ENCODE measurements at regions of chrX and their contacts with region 1.

Region 1: GRCh38 chrX:69538321-69538876 is 34.3 kb downstream of the NALF2 start:
- DNase-seq: peak; percentile 27 to 85
- H3K4me3 ChIP-seq: peak overlapping the region; percentile 20 to 64 (median 41); a peak in 7 of 8 replicates
- H3K27ac ChIP-seq: no peak overlapping the region
- H3K4me1 ChIP-seq: peaks cover 0 to 2% (median 0%) of the 10 kb centered on the region in 4 experiments; a peak in 2 of 7 replicates
- H3K27me3 ChIP-seq: no peaks in the 10 kb centered on the region; a peak in 1 of 7 replicates
- CTCF ChIP-seq: peak; percentile 66 to 88 (median 79)
- EP300 ChIP-seq: no peak
- POLR2A ChIP-seq: no peak
- RAD21 ChIP-seq: peak; percentile 91 to 95

Region 2: GRCh38 chrX:69523314-69523713 is 15.1 kb before region 1 on chrX:
- CTCF ChIA-PET with region 1: interaction called, 26 read pairs
- POLR2A ChIA-PET with region 1: no interaction called
- DNase-seq: no peak
- H3K4me3 ChIP-seq: no peak overlapping the region
- H3K27ac ChIP-seq: no peak overlapping the region
- H3K4me1 ChIP-seq: peaks cover 0 to 9% (median 0%) of the 10 kb centered on the region in 4 experiments; a peak in 1 of 7 replicates
- H3K27me3 ChIP-seq: no peaks in the 10 kb centered on the region
- CTCF ChIP-seq: no peak
- EP300 ChIP-seq: no peak
- POLR2A ChIP-seq: no peak
- RAD21 ChIP-seq: no peak

Region 3: DNA sequence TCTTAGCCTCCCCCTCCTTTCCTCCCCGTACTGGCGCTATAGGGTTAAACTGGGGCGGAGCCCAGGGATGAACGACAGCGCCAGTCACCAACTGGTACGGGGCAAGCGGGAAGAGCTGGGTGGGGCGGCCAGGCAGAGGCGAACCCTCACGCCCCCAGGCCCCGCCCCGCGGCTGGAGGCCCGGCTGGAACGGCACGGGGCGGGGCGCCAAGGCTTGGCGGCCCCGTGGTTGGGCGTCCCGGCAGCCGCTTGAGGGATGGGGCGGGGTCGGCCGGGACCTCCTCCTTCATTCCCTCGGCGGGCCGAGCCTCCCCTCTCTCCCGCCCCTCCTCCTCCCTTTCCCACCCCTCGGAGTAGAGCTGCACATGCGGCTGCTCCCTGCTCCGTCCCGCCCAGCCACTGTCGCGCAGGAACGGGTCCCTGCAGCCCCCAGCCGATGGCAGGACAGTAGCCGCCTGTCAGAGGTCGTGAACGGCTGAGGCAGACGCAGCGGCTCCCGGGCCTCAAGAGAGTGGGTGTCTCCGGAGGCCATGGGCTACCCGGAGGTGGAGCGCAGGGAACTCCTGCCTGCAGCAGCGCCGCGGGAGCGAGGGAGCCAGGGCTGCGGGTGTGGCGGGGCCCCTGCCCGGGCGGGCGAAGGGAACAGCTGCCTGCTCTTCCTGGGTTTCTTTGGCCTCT is 77.5 kb after region 1 on chrX and contains the start of gene EDA:
- CTCF ChIA-PET with region 1: interaction called, 28 read pairs
- POLR2A ChIA-PET with region 1: interaction called, 3 read pairs
- DNase-seq: peak; percentile 57 to 85
- H3K4me3 ChIP-seq: peak within 1 kb of the TSS; percentile 53 to 75 (median 63)
- H3K27ac ChIP-seq: no peak within 1 kb of the TSS
- H3K4me1 ChIP-seq: peaks cover 0 to 4% (median 0%) of the 10 kb centered on the region in 4 experiments; a peak in 1 of 7 replicates
- H3K27me3 ChIP-seq: peaks cover 0 to 4% (median 2%) of the 10 kb centered on the region in 4 experiments; a peak in 3 of 7 replicates
- CTCF ChIP-seq: no peak
- EP300 ChIP-seq: no peak
- POLR2A ChIP-seq: no peak
- RAD21 ChIP-seq: no peak
- total RNA-seq, gene EDA: 10.1 and 10.5 TPM in 2 replicates

Measured in H1 (cell line).